Aorta (tissue), 5 donors: ENCODE measurements at regions of chr20 and their contacts with region 1.

Region 1: GRCh38 chr20:24379484-24379927 is 89.9 kb upstream of the SYNDIG1 start:
- DNase-seq: peak; percentile 73 to 78
- ATAC-seq: peak; percentile 71
- H3K4me3 ChIP-seq: no peak overlapping the region
- H3K27ac ChIP-seq: peak overlapping the region; percentile 47 to 88
- H3K4me1 ChIP-seq: peaks cover 0 to 7% of the 10 kb centered on the region in 2 donors
- H3K27me3 ChIP-seq: no peaks in the 10 kb centered on the region

Region 2: GRCh38 chr20:24469116-24469893 is 89.8 kb after region 1 on chr20 and contains the start of gene SYNDIG1:
- intact Hi-C with region 1: loop called in 1 of 2 experiments (anchors 5 kb)
- DNase-seq: peak in 1 of 2 donors; percentile 83
- ATAC-seq: peak; percentile 57
- H3K4me3 ChIP-seq: peak within 1 kb of the TSS; percentile 69 to 81
- H3K27ac ChIP-seq: peak within 1 kb of the TSS in 1 of 2 donors; percentile 24
- H3K4me1 ChIP-seq: no peaks in the 10 kb centered on the region
- H3K27me3 ChIP-seq: no peaks in the 10 kb centered on the region
- total RNA-seq, gene SYNDIG1: 4.5 to 6.2 TPM

Region 3: GRCh38 chr20:24917797-24918578 is 538.5 kb after region 1 on chr20:
- intact Hi-C with region 1: no loop called
- DNase-seq: peak; percentile 79 to 90
- ATAC-seq: peak; percentile 94
- H3K4me3 ChIP-seq: no peak overlapping the region
- H3K27ac ChIP-seq: no peak overlapping the region
- H3K4me1 ChIP-seq: no peaks in the 10 kb centered on the region
- H3K27me3 ChIP-seq: no peaks in the 10 kb centered on the region